ENCODE measurements at regions of chr6 and their contacts with region 1.

Region 1: GRCh38 chr6:155327326-155328073 is 13.2 kb upstream of the TFB1M start:
- DNase-seq: no peak
- H3K4me3 ChIP-seq: no peak overlapping the region
- H3K27ac ChIP-seq: no peak overlapping the region
- H3K4me1 ChIP-seq: no peaks in the 10 kb centered on the region
- H3K27me3 ChIP-seq: no peaks in the 10 kb centered on the region
- CTCF ChIP-seq: peak; percentile 68 to 88 (median 76)
- POLR2A ChIP-seq: no peak

Region 2: GRCh38 chr6:155493694-155494143 is 166.2 kb after region 1 on chr6:
- intact Hi-C with region 1: loop called (anchors 10 kb)
- DNase-seq: no peak
- H3K4me3 ChIP-seq: no peak overlapping the region
- H3K27ac ChIP-seq: peak overlapping the region; percentile 70
- H3K4me1 ChIP-seq: peaks cover 6% of the 10 kb centered on the region
- H3K27me3 ChIP-seq: no peaks in the 10 kb centered on the region
- CTCF ChIP-seq: no peak
- POLR2A ChIP-seq: no peak

Region 3: DNA sequence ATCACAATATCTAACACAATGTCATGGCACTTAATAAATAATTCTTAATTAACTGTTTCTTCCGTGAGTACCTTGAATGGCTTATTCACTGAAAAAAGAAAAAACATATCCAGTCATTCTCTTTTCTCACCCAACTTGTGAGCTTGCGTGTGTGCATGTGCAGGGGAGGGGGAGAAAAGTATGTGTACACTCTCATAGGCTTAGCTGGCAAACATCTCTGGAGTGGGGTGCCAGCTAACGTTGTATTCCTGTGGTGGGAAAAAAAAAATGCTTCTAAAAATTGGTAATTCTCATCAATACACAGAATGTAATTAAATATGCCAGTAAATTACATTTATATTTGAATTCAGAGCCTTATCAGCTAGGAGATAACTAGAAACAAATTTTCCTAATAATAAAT is 420.0 kb after region 1 on chr6:
- intact Hi-C with region 1: no loop called
- DNase-seq: no peak
- H3K4me3 ChIP-seq: no peak overlapping the region
- H3K27ac ChIP-seq: no peak overlapping the region
- H3K4me1 ChIP-seq: no peaks in the 10 kb centered on the region
- H3K27me3 ChIP-seq: no peaks in the 10 kb centered on the region
- CTCF ChIP-seq: no peak
- POLR2A ChIP-seq: no peak